SK-N-SH (cell line): ENCODE measurements at regions of chr1 and their contacts with region 1.

Region 1: DNA sequence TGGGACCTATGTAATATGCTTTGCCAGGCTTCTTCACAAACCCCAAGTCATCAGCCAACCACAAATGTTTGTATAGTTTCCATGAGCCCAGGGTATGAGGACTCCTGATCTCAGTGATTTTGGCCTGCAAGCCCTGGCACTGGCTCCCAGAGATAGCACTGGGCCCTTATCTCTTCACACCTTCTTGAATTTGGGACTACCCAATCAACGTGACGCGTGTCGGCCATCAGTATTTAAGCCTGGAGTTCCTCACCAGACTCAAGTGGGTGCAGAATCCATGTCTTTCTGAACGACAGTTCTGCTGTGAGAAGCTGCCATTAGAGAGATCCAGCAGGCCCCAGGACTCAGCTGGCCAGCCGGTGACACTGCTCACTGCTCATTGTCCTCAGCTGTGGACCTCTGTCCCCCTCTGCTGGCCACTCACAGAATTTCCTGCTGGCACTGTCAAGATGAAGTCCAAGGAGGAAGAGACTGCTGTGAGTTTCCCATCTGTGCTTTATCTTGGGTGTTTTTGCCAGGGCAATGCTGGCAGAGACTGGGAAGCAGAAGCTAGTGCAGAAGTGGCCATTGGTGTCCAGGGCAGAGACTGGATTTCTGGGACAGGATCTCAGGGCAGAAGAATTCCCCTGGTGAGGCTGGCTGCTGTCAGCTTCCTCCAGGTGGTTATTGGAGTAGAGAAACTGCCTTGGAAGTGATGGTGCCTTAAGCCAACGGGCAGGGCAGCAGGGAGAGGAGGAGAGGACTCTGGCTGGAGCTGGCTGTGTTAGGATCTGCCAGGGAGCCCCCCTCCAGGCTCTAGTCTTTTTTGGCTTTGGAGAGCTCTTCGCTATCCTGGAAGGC is 28.4 kb downstream of the TMCC2 start:
- DNase-seq: peak; percentile 90
- H3K4me3 ChIP-seq: no peak overlapping the region; a peak in 1 of 4 replicates
- H3K27ac ChIP-seq: no peak overlapping the region
- H3K4me1 ChIP-seq: peaks cover 14 to 19% of the 10 kb centered on the region in 2 experiments; a peak in 3 of 4 replicates
- H3K27me3 ChIP-seq: no peaks in the 10 kb centered on the region
- CTCF ChIP-seq: peak; percentile 94
- EP300 ChIP-seq: no peak
- RAD21 ChIP-seq: peak; percentile 100

Region 2: GRCh38 chr1:204980840-204981405 is 275.2 kb before region 1 on chr1:
- CTCF ChIA-PET with region 1: interaction called, 113 read pairs
- POLR2A ChIA-PET with region 1: no interaction called
- DNase-seq: no peak
- H3K4me3 ChIP-seq: no peak overlapping the region
- H3K27ac ChIP-seq: no peak overlapping the region
- H3K4me1 ChIP-seq: no peaks in the 10 kb centered on the region
- H3K27me3 ChIP-seq: no peaks in the 10 kb centered on the region
- CTCF ChIP-seq: no peak
- EP300 ChIP-seq: no peak
- RAD21 ChIP-seq: no peak

Region 3: GRCh38 chr1:205108464-205108863 is 147.7 kb before region 1 on chr1:
- CTCF ChIA-PET with region 1: interaction called, 11 read pairs
- POLR2A ChIA-PET with region 1: no interaction called
- DNase-seq: no peak
- H3K4me3 ChIP-seq: no peak overlapping the region
- H3K27ac ChIP-seq: no peak overlapping the region
- H3K4me1 ChIP-seq: no peaks in the 10 kb centered on the region
- H3K27me3 ChIP-seq: no peaks in the 10 kb centered on the region
- CTCF ChIP-seq: no peak
- EP300 ChIP-seq: no peak
- RAD21 ChIP-seq: no peak

Region 4: DNA sequence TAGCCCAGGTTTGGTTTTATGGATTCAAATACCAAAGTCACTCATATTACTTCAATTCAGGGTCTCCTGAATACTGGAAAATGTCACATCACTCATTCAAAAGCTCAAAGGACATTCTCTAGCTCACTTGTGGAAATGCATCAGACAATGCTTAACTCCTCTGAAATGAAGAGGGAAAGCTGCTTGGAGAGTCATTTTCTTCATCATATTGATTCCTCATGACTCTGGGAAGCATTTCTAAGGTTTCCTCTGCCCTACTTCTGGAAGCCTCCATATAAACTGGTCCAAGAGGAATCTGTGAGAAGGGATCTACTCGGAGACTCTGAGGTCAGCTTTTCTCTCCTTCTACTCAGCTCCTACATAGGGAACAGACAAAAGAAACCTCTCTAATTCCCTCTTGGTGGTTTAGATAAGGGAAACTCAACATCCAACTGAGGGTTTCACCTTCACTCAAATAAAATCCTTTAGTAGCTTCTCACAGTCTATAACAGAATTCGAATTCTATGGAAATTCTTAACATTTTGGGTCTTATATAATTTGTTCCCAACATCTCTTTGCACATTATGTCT is 98.0 kb before region 1 on chr1:
- CTCF ChIA-PET with region 1: interaction called, 11 read pairs
- POLR2A ChIA-PET with region 1: no interaction called
- DNase-seq: no peak
- H3K4me3 ChIP-seq: no peak overlapping the region
- H3K27ac ChIP-seq: no peak overlapping the region
- H3K4me1 ChIP-seq: no peaks in the 10 kb centered on the region
- H3K27me3 ChIP-seq: no peaks in the 10 kb centered on the region
- CTCF ChIP-seq: no peak
- EP300 ChIP-seq: no peak
- RAD21 ChIP-seq: no peak

Region 5: GRCh38 chr1:205227584-205228006 is 28.6 kb before region 1 on chr1 and contains the start of gene TMCC2:
- CTCF ChIA-PET with region 1: interaction called, 154 read pairs
- POLR2A ChIA-PET with region 1: no interaction called
- DNase-seq: peak; percentile 99
- H3K4me3 ChIP-seq: peak within 1 kb of the TSS; percentile 78 to 81
- H3K27ac ChIP-seq: peak within 1 kb of the TSS in 1 of 2 experiments; percentile 56; a peak in 1 of 4 replicates
- H3K4me1 ChIP-seq: peaks cover 4 to 21% of the 10 kb centered on the region in 2 experiments; a peak in 2 of 4 replicates
- H3K27me3 ChIP-seq: no peaks in the 10 kb centered on the region
- CTCF ChIP-seq: no peak
- EP300 ChIP-seq: no peak
- RAD21 ChIP-seq: peak; percentile 8; the same call in 1 of the 2 replicates
- polyA plus RNA-seq, gene TMCC2: 5.3 and 6.0 TPM in 2 replicates

Region 6: GRCh38 chr1:205273551-205273982 is 17.4 kb after region 1 on chr1:
- CTCF ChIA-PET with region 1: interaction called, 189 read pairs
- POLR2A ChIA-PET with region 1: no interaction called
- DNase-seq: peak; percentile 91
- H3K4me3 ChIP-seq: no peak overlapping the region; a peak in 1 of 4 replicates
- H3K27ac ChIP-seq: no peak overlapping the region
- H3K4me1 ChIP-seq: peaks cover 3 to 10% of the 10 kb centered on the region in 2 experiments; a peak in 3 of 4 replicates
- H3K27me3 ChIP-seq: no peaks in the 10 kb centered on the region
- CTCF ChIP-seq: peak; percentile 95
- EP300 ChIP-seq: no peak
- RAD21 ChIP-seq: peak; percentile 97

Region 7: GRCh38 chr1:205396967-205397616 is 140.9 kb after region 1 on chr1:
- CTCF ChIA-PET with region 1: no interaction called
- POLR2A ChIA-PET with region 1: no interaction called
- DNase-seq: peak; percentile 75
- H3K4me3 ChIP-seq: peak overlapping the region in 1 of 2 experiments; percentile 38; a peak in 1 of 4 replicates
- H3K27ac ChIP-seq: no peak overlapping the region
- H3K4me1 ChIP-seq: no peaks in the 10 kb centered on the region
- H3K27me3 ChIP-seq: no peaks in the 10 kb centered on the region; the same call in 1 of the 2 replicates
- CTCF ChIP-seq: peak; percentile 65
- EP300 ChIP-seq: no peak
- RAD21 ChIP-seq: peak; percentile 94

Region 8: DNA sequence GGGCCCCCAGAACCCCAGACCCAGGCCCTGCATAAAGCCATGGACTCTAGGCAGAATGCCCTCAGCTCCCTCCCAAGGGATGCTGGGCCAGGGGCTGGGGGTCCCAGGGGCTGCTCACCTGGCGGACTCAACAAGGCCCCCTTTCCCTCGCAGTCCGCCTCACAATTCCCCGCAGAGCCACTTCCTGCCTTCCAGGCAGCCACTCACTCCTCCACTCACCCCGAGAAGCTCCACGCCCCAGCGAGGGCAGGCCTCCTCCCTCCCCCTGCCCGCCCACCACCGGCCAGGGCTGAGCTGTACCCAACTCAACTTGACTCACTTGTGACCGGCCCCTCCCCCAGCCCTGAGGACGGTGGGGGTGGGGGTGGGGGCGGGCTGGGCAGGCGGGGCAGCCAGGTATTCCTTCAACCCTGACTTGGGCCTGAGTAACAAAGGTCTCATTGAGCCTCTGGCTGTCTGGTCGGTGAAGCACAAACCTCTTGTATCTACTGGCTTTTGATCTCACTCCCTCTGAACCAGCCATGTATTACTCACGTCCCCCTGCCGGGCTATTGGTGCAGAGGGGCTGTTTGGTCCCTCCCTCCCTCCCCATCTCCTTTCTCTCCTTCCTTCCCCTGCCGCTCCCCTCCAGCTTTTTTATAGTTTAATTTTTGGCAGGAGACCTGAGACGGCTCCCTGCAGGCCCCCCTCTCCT is 193.7 kb after region 1 on chr1:
- CTCF ChIA-PET with region 1: no interaction called
- POLR2A ChIA-PET with region 1: no interaction called
- DNase-seq: peak; percentile 52
- H3K4me3 ChIP-seq: no peak overlapping the region
- H3K27ac ChIP-seq: no peak overlapping the region
- H3K4me1 ChIP-seq: peaks cover 0 to 6% of the 10 kb centered on the region in 2 experiments; a peak in 1 of 4 replicates
- H3K27me3 ChIP-seq: peaks cover 41% of the 10 kb centered on the region
- CTCF ChIP-seq: no peak
- EP300 ChIP-seq: no peak
- RAD21 ChIP-seq: no peak